ENCODE measurements at regions of chr2 and their contacts with region 1.

Region 1: GRCh38 chr2:190718652-190719526 is 70.0 kb downstream of the NAB1 start:
- DNase-seq: peak; percentile 86
- ATAC-seq: peak; percentile 64
- H3K4me3 Mint-ChIP-seq: peak overlapping the region; percentile 16
- H3K27ac Mint-ChIP-seq: peak overlapping the region; percentile 86
- H3K4me1 Mint-ChIP-seq: peaks cover 73% of the 10 kb centered on the region
- H3K27me3 Mint-ChIP-seq: no peaks in the 10 kb centered on the region

Region 2: DNA sequence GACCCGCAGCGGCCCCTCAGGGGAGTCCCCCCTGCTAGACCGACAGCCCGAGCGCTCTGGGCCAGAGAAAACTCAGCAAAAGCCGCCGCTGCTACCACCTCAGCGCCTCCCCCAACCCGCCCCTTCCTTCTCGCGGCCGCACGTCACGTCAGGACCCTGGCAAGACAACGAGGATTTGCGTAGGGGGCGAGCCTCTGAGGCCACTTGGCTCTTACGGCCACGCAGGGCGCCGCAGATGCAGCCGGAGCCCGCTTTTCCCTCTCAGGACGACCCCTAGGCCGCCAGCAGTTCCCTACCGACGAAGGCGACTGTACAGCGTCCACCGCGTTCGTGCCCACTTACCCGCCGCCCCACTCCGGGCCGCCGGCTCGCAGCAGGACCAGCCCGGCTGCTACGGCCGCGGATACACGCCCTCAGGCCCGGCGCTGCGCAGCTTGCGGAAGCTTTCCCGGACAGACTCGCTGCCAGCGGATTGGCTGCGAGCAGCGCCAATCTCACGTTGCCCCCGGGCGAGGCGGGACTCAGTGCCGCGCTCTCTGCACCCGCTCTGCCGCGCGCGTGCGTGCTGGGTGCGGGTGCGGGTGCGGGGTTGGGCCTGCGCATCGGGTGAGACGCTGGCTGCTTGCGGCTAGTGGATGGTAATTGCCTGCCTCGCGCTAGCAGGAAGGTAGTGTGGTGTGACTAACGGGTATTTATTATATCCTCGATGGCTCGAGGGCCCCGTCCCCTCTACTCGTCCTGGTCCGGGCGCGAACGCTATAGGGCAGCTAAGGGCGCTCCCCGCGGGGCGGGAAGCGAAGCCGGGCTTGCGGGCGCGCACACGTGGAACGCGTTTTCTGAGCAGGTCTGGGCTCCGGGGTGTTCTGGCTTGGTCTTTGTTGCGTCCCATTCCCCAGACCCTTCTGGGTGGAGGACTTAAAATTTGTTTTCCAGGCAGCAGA is 934.7 kb before region 1 on chr2 and contains the starts of genes ORMDL1 and PMS1:
- CTCF ChIA-PET with region 1: no interaction called
- POLR2A ChIA-PET with region 1: no interaction called
- intact Hi-C with region 1: loop called in 1 of 2 experiments (anchors 2 kb)
- DNase-seq: peak; percentile 96
- ATAC-seq: peak; percentile 92
- H3K4me3 Mint-ChIP-seq: peak within 1 kb of the TSS; percentile 74
- H3K27ac Mint-ChIP-seq: peak within 1 kb of the TSS; percentile 94
- H3K4me1 Mint-ChIP-seq: peaks cover 52% of the 10 kb centered on the region
- H3K27me3 Mint-ChIP-seq: no peaks in the 10 kb centered on the region
- total RNA-seq, gene ORMDL1: 45.2 to 49.2 TPM
- total RNA-seq, gene PMS1: 45.8 to 47.4 TPM

Region 3: DNA sequence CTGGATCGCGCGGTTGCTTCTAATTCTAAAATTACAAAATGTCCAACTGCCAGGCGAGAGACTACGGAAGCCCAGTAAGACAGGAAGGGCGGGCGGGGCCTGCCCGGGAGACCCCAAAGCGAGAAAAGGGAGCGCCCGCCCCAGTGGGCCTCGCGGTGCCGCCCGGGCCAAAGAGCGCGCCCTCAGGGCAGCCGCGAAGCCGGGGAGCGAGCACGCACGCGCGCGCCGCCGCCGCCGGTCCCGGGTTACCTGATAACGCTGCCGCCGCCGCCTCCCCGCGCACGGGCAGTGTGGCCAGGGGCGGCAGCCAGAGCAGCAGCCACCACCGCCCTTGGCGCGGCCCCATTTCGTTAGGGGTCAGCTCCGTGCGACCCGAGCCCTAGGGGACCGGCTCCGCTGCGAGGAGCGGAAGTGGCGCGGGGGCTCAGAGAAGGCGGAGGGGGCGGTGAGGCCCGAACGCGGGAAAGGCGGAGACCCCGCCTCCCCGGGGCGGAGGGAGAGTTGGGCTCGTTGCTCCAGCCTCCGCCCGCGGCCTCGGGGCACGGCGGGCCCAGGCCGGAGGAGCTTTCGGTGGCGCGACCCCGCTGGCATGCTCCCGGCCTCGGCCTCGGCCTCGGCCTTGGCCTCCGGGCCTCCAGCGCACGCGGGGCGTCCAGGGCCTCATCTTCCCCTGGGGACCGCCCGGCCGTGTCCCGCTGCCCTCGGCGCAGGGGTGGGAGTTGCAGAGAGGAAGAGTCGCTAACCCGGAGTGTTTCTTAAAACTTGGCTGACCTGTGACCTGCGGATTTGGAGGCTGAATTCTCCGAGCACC is 184.4 kb before region 1 on chr2 and contains the start of gene NEMP2:
- CTCF ChIA-PET with region 1: no interaction called
- POLR2A ChIA-PET with region 1: no interaction called
- intact Hi-C with region 1: loop called (anchors 2 kb)
- DNase-seq: peak; percentile 87
- ATAC-seq: peak; percentile 70
- H3K4me3 Mint-ChIP-seq: peak within 1 kb of the TSS; percentile 95
- H3K27ac Mint-ChIP-seq: peak within 1 kb of the TSS; percentile 98
- H3K4me1 Mint-ChIP-seq: peaks cover 52% of the 10 kb centered on the region
- H3K27me3 Mint-ChIP-seq: no peaks in the 10 kb centered on the region
- total RNA-seq, gene NEMP2: 24.6 to 25.1 TPM

Region 4: DNA sequence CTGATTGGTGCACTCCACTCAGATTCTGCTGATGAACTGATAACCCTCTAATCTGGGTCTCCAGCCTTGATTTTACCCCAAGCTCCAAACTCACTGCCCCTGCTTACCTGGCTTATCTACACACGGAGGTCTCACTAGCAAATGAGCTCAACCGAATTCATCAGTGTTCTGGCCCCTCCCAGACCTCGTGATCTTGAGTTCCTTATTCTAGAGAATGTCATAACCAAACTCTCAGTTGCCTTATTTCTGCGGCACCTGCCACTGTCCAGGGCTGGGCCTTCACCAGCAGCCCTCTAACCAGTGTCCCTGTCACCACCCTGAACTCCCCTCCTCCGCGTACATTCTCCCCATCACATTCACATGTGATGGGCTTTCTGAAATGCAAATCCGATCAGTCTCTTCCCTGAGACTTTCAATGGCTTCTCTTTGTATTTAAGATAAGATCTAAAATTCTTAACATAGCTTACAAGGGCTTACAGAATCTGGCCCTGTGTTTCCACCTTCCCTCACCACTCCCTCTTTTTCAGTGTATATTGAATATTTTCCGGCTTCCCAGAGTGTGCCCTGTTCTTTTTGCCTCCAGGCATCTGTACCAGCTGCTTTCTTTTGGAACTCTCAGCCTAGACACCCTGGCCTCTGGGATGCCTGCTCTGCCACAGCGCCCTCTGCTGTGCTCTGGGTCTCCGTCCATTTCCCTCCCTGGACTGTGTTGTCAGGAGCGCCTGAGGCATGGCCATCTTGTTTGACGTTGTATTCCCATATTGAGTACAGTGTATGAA is 38.9 kb before region 1 on chr2:
- CTCF ChIA-PET with region 1: interaction called, 18 read pairs
- POLR2A ChIA-PET with region 1: interaction called, 65 read pairs
- intact Hi-C with region 1: loop called (anchors 1 kb)
- DNase-seq: peak; percentile 75
- ATAC-seq: no peak
- H3K4me3 Mint-ChIP-seq: peak overlapping the region; percentile 36
- H3K27ac Mint-ChIP-seq: peak overlapping the region; percentile 97
- H3K4me1 Mint-ChIP-seq: peaks cover 56% of the 10 kb centered on the region
- H3K27me3 Mint-ChIP-seq: no peaks in the 10 kb centered on the region

Region 5: GRCh38 chr2:190746971-190747761 is 28.3 kb after region 1 on chr2:
- CTCF ChIA-PET with region 1: interaction called, 4 read pairs
- POLR2A ChIA-PET with region 1: no interaction called
- intact Hi-C with region 1: loop called in 1 of 2 experiments (anchors 2 kb)
- DNase-seq: no peak
- ATAC-seq: peak; percentile 84
- H3K4me3 Mint-ChIP-seq: no peak overlapping the region
- H3K27ac Mint-ChIP-seq: peak overlapping the region; percentile 15
- H3K4me1 Mint-ChIP-seq: peaks cover 31% of the 10 kb centered on the region
- H3K27me3 Mint-ChIP-seq: no peaks in the 10 kb centered on the region

Region 6: DNA sequence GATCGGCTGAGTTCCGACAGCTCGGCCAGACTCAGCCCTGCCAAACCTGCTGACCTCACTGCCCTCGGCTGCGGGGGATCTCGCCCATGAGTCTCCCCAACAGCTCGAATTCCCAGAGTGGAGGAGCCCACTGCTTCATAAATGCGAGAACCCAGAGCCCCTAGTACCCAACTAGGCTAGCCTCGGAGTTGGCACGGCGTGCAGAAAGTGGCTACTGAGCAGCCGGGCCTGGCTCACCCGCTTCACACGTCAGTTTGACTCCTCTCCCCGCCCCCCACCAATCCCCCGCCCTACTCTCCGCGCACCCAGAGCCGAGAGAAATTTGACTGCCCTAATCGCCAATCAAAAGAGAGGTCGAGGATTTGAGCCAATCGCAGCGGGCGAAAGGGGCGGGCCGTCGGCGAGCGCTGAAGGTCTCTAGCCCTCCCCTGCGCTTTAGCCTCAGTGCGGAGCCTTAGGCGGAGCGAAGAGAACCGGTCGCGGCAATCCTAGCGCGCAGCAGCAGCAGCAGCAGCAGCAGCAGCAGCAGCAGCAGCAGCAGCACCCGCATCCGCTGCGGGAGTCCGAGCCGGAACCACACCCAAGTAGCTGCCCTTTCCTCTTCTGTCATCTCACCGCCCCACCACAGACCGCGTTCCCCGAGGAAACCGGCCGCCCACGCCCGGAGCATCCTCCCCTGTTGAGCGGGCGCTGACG is 161.6 kb after region 1 on chr2 and contains the start of gene GLS:
- CTCF ChIA-PET with region 1: no interaction called
- POLR2A ChIA-PET with region 1: interaction called, 3 read pairs
- intact Hi-C with region 1: loop called (anchors 1 kb)
- DNase-seq: peak; percentile 98
- ATAC-seq: peak; percentile 81
- H3K4me3 Mint-ChIP-seq: peak within 1 kb of the TSS; percentile 79
- H3K27ac Mint-ChIP-seq: peak within 1 kb of the TSS; percentile 98
- H3K4me1 Mint-ChIP-seq: peaks cover 41% of the 10 kb centered on the region
- H3K27me3 Mint-ChIP-seq: no peaks in the 10 kb centered on the region
- total RNA-seq, gene GLS: 136 to 242 TPM

Region 7: DNA sequence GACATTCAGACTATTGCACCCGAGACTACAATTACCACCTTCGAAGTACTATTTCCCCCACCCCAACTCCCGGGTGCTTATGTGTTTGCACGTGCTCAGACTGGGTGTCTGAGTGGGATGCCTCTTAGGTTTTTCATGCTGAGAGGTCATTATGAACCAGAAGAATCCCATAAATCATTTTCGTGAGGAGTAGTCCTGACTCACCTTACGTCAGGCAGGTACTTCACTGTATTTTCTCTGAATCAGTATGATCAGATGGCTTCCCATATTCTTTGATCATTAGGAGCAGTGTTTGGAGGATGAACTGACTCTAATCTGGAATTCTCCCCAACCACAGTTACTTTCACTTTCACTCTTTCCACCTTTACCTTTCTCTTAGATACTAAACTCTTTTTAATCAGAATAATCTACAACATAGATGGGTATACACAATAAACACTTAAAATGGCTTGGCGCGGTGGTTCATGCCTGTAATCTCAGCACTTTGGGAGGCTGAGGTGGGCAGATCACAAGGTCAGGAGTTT is 470.3 kb after region 1 on chr2:
- CTCF ChIA-PET with region 1: no interaction called
- POLR2A ChIA-PET with region 1: no interaction called
- intact Hi-C with region 1: loop called in 1 of 2 experiments (anchors 1 kb)
- DNase-seq: no peak
- ATAC-seq: no peak
- H3K4me3 Mint-ChIP-seq: peak overlapping the region; percentile 19
- H3K27ac Mint-ChIP-seq: peak overlapping the region; percentile 68
- H3K4me1 Mint-ChIP-seq: peaks cover 63% of the 10 kb centered on the region
- H3K27me3 Mint-ChIP-seq: no peaks in the 10 kb centered on the region